Dorsolateral prefrontal cortex (tissue), 120 donors: ENCODE measurements at regions of chr5 and their contacts with region 1.

Region 1: GRCh38 chr5:32174011-32174870 is at the start of gene GOLPH3:
- DNase-seq: peak; percentile 83 to 94 (median 90)
- H3K4me3 ChIP-seq: peak within 1 kb of the TSS; percentile 64 to 99 (median 94)
- H3K27ac ChIP-seq: peak within 1 kb of the TSS; percentile 93 to 100 (median 99)
- H3K27me3 ChIP-seq: no peaks in the 10 kb centered on the region
- CTCF ChIP-seq: peak in 29 of 56 donors; percentile 7 to 48 (median 25)
- total RNA-seq, gene GOLPH3: 44.5 to 71.5 (median 53.5) TPM

Region 2: DNA sequence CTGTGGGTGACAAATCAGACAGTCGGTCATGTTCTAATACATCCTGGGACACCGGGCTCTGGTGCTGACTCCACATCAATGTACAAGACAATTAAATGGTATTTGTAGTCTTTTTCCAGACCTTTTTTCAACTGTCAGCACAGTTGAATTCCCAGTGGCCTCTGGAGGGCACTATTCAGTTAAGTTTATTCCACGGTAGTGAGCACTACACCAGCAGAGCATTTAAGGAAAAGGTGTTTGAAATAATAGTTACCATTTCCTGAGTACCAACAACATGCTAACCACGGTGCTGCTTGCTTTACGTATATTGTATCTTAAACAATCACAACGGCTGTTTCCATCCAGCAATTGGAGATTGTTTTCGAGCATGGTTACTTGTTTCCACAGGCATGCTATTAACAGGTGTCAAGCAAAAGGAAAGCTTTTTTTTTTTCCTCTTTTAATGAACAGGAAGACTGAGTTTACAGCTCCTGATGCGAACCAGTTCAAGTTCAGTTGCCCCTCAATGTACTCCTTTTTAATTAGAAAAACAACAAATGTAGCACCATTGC is 348.6 kb before region 1 on chr5:
- intact Hi-C with region 1: loop called in 1 of 2 experiments (anchors 10 kb)
- DNase-seq: peak in 5 of 10 donors; percentile 20 to 66 (median 41)
- H3K4me3 ChIP-seq: no peak overlapping the region
- H3K27ac ChIP-seq: peak overlapping the region in 3 of 59 donors; percentile 27 to 51 (median 34)
- H3K27me3 ChIP-seq: no peaks in the 10 kb centered on the region
- CTCF ChIP-seq: peak; percentile 48 to 91 (median 79)

Region 3: DNA sequence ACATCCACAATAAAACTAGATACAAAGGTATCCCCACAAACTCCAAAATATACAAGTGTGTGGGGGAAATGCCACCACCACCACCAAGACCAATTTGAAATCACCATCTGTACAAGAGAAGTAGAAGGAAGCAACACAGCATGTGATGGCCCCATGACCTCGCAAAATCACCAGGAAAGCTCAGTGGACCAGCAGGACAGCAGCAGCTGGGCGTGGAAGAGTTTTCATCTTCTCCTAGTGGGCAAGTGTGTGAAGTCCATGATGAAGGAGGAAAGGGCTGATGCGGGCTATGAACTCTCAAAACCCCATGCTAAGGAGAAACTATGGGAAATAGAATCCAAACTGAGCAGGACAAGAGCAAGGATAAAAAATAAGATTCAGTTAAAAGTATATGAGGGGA is 58.3 kb before region 1 on chr5:
- intact Hi-C with region 1: loop called in 1 of 2 experiments (anchors 10 kb)
- DNase-seq: no peak
- H3K4me3 ChIP-seq: no peak overlapping the region
- H3K27ac ChIP-seq: peak overlapping the region in 3 of 59 donors; percentile 4 to 44 (median 35)
- H3K27me3 ChIP-seq: no peaks in the 10 kb centered on the region
- CTCF ChIP-seq: peak in 5 of 56 donors; percentile 8 to 22 (median 12)

Region 4: GRCh38 chr5:32312647-32313523 is 138.6 kb after region 1 on chr5 and contains the start of gene MTMR12:
- intact Hi-C with region 1: loop called in 1 of 2 experiments (anchors 5 kb)
- DNase-seq: peak; percentile 98 to 100 (median 100)
- H3K4me3 ChIP-seq: peak within 1 kb of the TSS; percentile 64 to 100 (median 91)
- H3K27ac ChIP-seq: peak within 1 kb of the TSS; percentile 46 to 99 (median 92)
- H3K27me3 ChIP-seq: no peaks in the 10 kb centered on the region
- CTCF ChIP-seq: peak in 20 of 56 donors; percentile 6 to 40 (median 20)
- total RNA-seq, gene MTMR12: 24.4 to 67.2 (median 41.4) TPM